Spleen (tissue), 13 donors: ENCODE measurements at regions of chr11 and their contacts with region 1.

Region 1: DNA sequence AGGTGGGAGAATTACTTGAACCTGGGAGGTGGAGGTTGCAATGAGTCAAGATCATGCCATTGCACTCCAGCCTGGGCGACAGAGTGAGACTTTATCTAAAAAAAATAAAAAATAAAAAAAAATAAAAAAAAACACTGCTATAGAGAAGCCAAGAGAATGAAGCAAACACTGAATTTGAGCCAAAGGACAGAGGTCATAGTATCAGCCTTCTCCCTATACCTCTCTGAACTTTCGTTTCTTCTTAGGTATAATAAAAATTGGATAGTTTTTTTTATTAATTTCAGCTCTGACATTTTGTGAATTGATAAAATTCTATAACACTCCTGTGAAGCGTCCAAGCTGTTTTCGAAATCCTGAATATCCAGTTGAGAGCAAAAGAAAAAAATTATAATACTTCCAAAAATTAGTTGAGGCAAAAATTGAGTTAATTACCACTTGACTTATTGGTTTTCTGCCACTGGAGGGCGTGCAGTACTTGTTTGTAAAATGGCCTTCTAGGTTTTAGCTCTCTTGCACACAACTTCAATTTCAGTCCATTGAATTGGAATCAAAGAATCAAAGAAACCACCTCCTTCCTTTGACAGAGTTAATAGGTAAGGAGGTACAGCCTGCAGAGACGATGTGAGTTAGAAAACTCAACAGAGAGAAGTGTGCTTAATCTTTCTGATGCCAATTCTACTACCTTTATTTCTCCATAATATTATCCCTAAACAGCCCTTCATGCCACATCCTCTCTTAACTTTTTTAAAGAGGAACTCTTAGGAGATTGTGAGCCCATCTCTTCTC is 143.2 kb downstream of the BBOX1 start:
- DNase-seq: no peak
- H3K4me3 ChIP-seq: no peak overlapping the region
- H3K27ac ChIP-seq: peak overlapping the region in 3 of 8 donors; percentile 34 to 55 (median 39)
- H3K4me1 ChIP-seq: peaks cover 0 to 16% (median 5%) of the 10 kb centered on the region in 6 donors
- H3K27me3 ChIP-seq: peaks cover 0 to 6% (median 0%) of the 10 kb centered on the region in 7 donors
- CTCF ChIP-seq: peak; percentile 25 to 73 (median 54)
- POLR2A ChIP-seq: no peak

Region 2: GRCh38 chr11:27296497-27296896 is 112.6 kb after region 1 on chr11:
- intact Hi-C with region 1: loop called (anchors 5 kb)
- DNase-seq: no peak
- H3K4me3 ChIP-seq: no peak overlapping the region
- H3K27ac ChIP-seq: peak overlapping the region in 1 of 8 donors; percentile 10
- H3K4me1 ChIP-seq: peaks cover 0 to 4% (median 0%) of the 10 kb centered on the region in 6 donors
- H3K27me3 ChIP-seq: no peaks in the 10 kb centered on the region
- CTCF ChIP-seq: peak in 8 of 11 experiments; percentile 15 to 61 (median 48)
- POLR2A ChIP-seq: no peak

Region 3: DNA sequence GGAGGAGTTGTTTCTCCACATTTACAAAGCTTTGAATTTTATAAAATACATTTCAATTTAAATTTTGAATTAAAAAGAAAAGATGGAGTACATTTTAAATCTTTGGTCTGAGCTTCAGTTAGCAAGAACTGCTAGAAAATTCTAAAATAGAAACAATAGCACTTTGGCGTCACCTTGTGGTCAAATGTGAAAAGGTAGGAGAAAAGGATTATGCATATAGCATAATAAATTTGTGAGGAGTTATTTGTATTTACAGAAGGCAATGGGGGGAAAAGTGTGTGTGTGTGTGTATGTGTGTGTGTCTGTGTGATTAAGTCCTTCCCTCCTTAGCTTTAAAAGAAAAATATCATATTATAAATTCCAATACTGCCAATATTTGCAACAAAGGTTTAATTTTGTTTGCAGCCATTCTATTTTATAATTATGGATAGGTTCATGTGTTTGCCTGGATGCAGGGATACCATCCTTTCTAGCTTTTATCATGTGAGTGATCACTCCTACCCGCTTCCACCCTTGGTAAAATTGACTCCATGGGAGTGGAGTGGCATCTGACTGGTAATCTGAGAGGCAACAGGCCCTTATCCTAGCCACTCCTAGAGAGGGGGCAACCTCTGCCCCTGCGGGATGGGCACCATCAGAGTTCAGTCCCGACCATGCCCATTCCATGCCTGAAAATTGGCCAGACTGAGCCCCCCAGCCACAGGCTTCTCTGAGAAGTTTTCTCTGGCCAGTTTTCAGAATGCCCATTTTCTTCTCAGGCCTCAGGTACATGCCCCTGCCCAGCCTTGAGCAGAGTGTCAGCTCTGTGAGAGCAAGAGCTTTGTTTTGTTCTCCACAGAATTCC is 302.3 kb after region 1 on chr11:
- intact Hi-C with region 1: loop called (anchors 5 kb)
- DNase-seq: no peak
- H3K4me3 ChIP-seq: no peak overlapping the region
- H3K27ac ChIP-seq: no peak overlapping the region
- H3K4me1 ChIP-seq: no peaks in the 10 kb centered on the region
- H3K27me3 ChIP-seq: no peaks in the 10 kb centered on the region
- CTCF ChIP-seq: peak; percentile 49 to 90 (median 79)
- POLR2A ChIP-seq: no peak